ENCODE measurements at regions of chr16 and their contacts with region 1.

Region 1: GRCh38 chr16:51982715-51983680 is 563.9 kb downstream of the TOX3 start:
- DNase-seq: peak; percentile 72
- H3K4me3 Mint-ChIP-seq: peak overlapping the region; percentile 14
- H3K27ac Mint-ChIP-seq: peak overlapping the region; percentile 90
- H3K4me1 Mint-ChIP-seq: peaks cover 36% of the 10 kb centered on the region
- H3K27me3 Mint-ChIP-seq: no peaks in the 10 kb centered on the region
- CTCF ChIP-seq: peak; percentile 78

Region 2: GRCh38 chr16:51146256-51146924 is 836.6 kb before region 1 on chr16:
- CTCF ChIA-PET with region 1: no interaction called
- intact Hi-C with region 1: loop called (anchors 5 kb)
- DNase-seq: no peak
- H3K4me3 Mint-ChIP-seq: no peak overlapping the region
- H3K27ac Mint-ChIP-seq: no peak overlapping the region
- H3K4me1 Mint-ChIP-seq: peaks cover 12% of the 10 kb centered on the region
- H3K27me3 Mint-ChIP-seq: peaks cover 44% of the 10 kb centered on the region
- CTCF ChIP-seq: peak; percentile 34

Region 3: DNA sequence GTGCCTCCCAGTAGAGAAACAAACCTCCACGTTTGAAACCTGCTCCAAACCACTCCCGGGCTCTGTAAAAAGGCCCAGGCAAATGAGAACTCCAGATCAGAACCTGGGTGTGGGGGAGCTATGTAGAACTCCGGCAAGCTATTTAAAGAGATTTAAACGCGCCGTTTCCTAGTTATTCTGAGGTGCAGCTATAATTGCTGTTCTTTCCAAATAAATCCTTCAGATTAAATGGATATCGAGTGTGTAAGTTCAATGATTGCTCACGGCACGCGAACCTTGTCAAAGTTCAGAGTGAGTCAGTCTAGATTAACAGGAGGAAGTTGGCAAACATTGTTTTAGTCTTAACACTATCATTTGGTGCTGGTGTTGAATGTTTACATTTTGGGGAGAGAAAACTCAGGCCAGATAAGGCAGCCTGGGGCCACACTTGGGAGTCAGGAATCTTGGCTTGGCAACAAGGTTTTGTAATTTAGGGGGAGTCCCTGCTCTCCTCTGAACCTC is 739.0 kb before region 1 on chr16:
- CTCF ChIA-PET with region 1: no interaction called
- intact Hi-C with region 1: loop called (anchors 10 kb)
- DNase-seq: peak; percentile 60
- H3K4me3 Mint-ChIP-seq: no peak overlapping the region
- H3K27ac Mint-ChIP-seq: no peak overlapping the region
- H3K4me1 Mint-ChIP-seq: peaks cover 22% of the 10 kb centered on the region
- H3K27me3 Mint-ChIP-seq: peaks cover 93% of the 10 kb centered on the region
- CTCF ChIP-seq: no peak

Region 4: DNA sequence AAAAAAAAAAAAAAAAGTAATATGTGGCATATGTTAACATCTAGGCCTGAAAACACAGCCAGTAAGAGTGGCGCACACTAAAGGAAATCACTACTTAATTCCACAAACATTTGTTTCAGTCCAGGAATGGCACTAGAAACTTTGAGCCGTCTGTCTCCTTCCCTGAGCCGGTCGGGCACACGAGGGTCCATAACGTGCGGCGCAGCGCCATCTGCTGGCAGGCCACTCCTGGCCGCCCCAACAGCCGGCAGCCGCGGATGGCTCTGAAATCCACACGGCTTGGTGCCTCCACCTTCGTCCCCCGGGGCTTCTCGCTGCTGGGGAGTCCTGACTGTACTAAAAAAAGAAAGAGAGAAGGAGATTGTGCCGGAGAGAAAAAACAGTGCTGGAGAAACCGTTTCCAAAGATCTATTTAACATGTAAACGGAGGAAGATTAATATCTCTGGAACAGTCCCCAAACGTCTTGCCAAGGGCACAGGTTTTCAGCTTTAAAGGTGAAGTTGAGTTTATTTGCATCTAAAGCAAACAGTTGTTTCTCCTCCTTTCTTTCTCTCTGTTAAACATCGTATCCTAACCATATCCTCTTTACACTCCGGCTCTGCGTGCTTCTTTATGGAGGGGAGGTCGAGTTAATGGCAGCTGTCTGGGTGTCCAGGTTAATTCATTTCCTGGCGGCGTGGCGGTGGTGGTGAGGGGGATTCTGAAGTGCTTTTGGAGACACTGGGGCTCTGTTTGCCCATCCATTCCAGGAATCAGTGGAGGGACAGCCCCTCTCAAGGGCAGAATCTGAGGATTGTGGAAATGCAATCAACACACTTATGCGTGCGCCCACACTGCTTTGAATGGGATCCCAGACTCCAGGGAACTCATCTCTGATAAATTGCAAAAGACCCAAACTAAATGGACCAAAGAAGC is 220.7 kb before region 1 on chr16:
- CTCF ChIA-PET with region 1: no interaction called
- intact Hi-C with region 1: loop called (anchors 1 kb)
- DNase-seq: peak; percentile 86
- H3K4me3 Mint-ChIP-seq: peak overlapping the region; percentile 29
- H3K27ac Mint-ChIP-seq: no peak overlapping the region
- H3K4me1 Mint-ChIP-seq: peaks cover 18% of the 10 kb centered on the region
- H3K27me3 Mint-ChIP-seq: peaks cover 65% of the 10 kb centered on the region
- CTCF ChIP-seq: peak; percentile 96

Region 5: DNA sequence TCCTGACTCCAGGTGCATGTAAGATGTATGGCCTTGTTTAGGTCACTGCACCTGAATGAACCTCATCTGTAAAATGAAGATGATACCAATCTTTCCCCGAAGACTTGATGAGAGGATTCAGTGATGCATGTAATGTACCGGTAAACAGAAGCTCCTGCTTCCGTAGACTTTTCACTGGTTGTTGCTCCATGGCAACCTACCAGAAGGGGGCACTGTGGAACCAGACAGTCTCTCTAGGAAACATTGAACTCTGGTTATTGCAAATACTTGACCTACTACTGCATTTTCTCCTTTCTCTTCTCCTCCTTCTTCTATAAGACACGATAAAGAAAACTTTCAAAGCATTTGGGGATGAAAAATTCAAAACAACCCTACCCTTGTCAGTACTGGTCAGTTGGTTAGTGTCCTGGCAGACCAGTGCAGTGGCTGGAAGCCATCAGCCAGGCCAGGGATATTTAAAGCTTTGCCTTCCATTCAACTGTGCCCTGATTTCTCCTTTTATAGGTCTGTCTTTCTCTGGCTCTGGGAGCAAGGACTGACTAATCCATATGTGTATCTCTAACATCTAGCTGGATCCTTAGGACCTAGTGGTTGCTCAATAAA is 164.6 kb before region 1 on chr16:
- CTCF ChIA-PET with region 1: interaction called, 17 read pairs
- intact Hi-C with region 1: loop called (anchors 1 kb)
- DNase-seq: peak; percentile 84
- H3K4me3 Mint-ChIP-seq: no peak overlapping the region
- H3K27ac Mint-ChIP-seq: no peak overlapping the region
- H3K4me1 Mint-ChIP-seq: peaks cover 24% of the 10 kb centered on the region
- H3K27me3 Mint-ChIP-seq: no peaks in the 10 kb centered on the region
- CTCF ChIP-seq: peak; percentile 88

Measured in Calu3 (cell line).